Dorsolateral prefrontal cortex (tissue), 120 donors: ENCODE measurements at regions of chr11 and their contacts with region 1.

Region 1: DNA sequence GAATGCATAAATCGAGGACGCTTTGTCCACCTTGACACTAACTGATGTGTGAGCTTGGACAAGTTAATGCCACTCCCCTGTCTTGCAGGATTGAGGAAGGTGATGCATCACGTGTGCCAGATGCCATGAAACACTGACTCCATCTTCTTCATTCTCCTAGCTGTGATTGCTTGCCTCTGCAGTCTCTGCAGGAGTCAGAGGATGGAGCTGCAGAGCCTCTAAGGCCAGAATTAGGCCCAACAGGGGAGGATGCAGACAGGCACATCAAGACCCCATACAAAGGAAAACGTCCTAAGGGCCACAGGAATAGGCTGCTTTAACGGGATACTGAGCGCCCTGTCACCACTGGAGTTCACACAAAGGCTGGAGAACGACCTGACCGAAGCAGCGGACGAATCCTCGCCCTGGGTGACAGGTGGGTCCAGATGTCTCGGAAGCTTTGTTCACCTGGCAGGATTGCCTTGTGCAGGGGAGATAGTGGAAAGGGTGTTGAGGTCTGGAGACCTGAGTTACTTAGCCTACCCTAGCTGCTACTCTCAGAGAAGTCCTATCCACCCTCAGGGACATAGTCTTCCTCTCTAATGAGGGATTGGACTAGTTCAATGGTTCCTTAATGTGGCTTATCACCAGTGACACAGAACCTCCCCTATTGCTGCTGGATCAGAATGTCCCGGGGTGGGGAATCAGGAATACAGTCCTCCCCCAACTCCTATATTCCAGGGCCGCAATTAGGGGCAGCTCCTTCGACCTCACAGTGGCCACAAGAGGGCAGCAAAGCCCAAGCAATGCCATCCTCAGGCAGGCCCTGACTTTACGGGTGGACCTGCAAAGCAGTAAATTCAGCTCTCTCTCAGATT is 32.4 kb downstream of the DBX1 start:
- DNase-seq: peak; percentile 76 to 88 (median 85)
- H3K4me3 ChIP-seq: no peak overlapping the region
- H3K27ac ChIP-seq: peak overlapping the region in 1 of 59 donors; percentile 4
- H3K27me3 ChIP-seq: no peaks in the 10 kb centered on the region
- CTCF ChIP-seq: peak; percentile 78 to 95 (median 89)

Region 2: GRCh38 chr11:19071255-19071654 is 1056.6 kb before region 1 on chr11:
- intact Hi-C with region 1: loop called in 1 of 2 experiments (anchors 10 kb)
- DNase-seq: peak in 9 of 10 donors; percentile 25 to 75 (median 58)
- H3K4me3 ChIP-seq: peak overlapping the region in 14 of 59 donors; percentile 4 to 35 (median 20)
- H3K27ac ChIP-seq: no peak overlapping the region
- H3K27me3 ChIP-seq: peaks cover 0 to 31% (median 3%) of the 10 kb centered on the region in 45 donors
- CTCF ChIP-seq: peak; percentile 60 to 98 (median 90)

Region 3: DNA sequence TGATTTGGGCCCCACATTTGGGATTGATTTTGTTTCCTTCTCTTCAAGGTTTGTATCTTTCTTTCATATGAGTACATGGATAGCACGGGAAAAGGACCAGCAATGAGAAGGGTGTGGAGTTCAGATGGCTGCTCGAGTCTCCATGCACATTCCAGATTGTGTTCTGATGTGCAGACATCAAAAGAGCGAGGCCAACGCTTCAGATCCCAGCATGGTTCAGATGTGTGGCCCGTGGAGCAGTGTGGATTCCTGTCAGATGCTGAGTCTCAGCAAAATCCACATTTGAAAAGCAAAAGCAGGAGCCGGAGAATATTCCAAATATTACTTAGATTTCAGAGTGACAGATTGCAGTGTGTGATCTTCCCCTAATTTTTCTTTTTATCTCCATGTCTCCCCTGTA is 187.1 kb before region 1 on chr11:
- intact Hi-C with region 1: no loop called
- DNase-seq: no peak
- H3K4me3 ChIP-seq: no peak overlapping the region
- H3K27ac ChIP-seq: no peak overlapping the region
- H3K27me3 ChIP-seq: no peaks in the 10 kb centered on the region
- CTCF ChIP-seq: no peak

Region 4: DNA sequence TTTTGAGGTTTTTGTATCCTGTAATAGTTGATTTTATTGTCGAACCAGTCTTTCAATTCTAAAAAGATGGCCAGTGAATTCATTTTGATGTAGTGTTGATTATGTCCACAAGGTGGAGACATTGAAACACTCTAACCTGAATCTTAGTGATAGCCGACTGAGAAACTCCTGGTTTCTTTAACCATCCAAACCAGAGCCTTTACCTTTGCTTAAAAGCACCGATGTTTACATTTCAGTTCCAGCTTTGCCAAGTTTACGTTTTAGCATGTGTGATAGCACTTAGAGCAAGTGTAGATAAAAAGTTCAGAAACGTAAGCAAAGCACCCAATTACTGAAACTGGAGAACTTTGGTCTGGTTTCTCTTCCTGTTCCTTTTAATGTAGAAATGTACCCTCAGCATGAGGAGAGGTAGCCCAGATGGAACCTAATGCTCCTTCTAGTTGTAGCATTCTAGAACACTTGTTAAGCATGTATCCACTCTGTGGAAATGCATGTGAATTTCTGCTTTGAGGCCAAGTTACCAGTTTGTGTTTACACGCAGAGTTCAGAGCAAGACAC is 176.3 kb before region 1 on chr11:
- intact Hi-C with region 1: loop called in 1 of 2 experiments (anchors 5 kb)
- DNase-seq: no peak
- H3K4me3 ChIP-seq: peak overlapping the region in 32 of 59 donors; percentile 1 to 47 (median 26)
- H3K27ac ChIP-seq: peak overlapping the region in 39 of 59 donors; percentile 1 to 80 (median 41)
- H3K27me3 ChIP-seq: no peaks in the 10 kb centered on the region
- CTCF ChIP-seq: peak; percentile 56 to 86 (median 76)

Region 5: DNA sequence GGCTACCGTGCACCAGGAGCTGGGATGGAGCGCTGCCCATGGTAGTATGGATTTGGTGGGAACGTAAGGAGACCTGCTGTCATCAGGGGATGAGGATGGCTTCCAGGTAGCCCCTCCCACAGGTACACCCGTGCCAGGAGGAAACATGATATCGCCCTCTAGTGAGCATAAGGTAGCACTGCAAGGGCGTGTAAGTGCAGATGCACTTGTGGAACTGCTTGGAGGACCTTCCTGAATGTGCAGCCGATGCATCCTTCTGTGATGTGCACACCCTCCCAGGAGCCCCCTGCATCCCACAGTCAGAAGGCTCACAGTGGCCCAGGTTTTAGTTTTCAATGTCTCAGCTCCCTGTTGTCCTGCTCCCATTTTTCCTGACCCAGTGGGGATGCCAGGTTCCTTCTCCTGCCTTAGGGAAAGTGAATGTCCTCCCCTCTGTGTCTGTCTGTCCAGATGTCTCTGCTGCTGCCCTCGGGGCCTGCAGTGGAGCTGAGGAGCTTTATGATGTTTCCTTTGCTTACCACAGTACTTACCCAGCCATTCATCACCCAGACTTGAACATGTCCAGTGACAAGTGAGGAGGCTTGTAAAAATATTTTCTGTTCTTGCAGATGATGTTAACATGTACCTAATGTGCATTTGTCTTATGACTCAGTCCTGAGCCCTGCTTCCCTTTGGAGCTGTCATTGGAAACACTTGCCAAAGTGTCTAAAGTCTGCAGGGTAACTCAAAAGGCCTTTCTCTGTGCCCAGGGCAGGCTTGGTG is 16.8 kb before region 1 on chr11:
- intact Hi-C with region 1: no loop called
- DNase-seq: peak in 3 of 10 donors; percentile 35 to 47 (median 44)
- H3K4me3 ChIP-seq: no peak overlapping the region
- H3K27ac ChIP-seq: peak overlapping the region in 43 of 59 donors; percentile 1 to 87 (median 76)
- H3K27me3 ChIP-seq: no peaks in the 10 kb centered on the region
- CTCF ChIP-seq: peak; percentile 60 to 88 (median 82)

Region 6: GRCh38 chr11:20172721-20173447 is 45.0 kb after region 1 on chr11:
- intact Hi-C with region 1: no loop called
- DNase-seq: no peak
- H3K4me3 ChIP-seq: no peak overlapping the region
- H3K27ac ChIP-seq: no peak overlapping the region
- H3K27me3 ChIP-seq: peaks cover 0 to 65% (median 15%) of the 10 kb centered on the region in 45 donors
- CTCF ChIP-seq: no peak

Region 7: GRCh38 chr11:20355221-20356219 is 227.6 kb after region 1 on chr11:
- intact Hi-C with region 1: loop called (anchors 2 to 5 kb)
- DNase-seq: peak in 7 of 10 donors; percentile 32 to 59 (median 57)
- H3K4me3 ChIP-seq: no peak overlapping the region
- H3K27ac ChIP-seq: no peak overlapping the region
- H3K27me3 ChIP-seq: no peaks in the 10 kb centered on the region
- CTCF ChIP-seq: peak in 54 of 56 donors; percentile 33 to 80 (median 66)

Region 8: DNA sequence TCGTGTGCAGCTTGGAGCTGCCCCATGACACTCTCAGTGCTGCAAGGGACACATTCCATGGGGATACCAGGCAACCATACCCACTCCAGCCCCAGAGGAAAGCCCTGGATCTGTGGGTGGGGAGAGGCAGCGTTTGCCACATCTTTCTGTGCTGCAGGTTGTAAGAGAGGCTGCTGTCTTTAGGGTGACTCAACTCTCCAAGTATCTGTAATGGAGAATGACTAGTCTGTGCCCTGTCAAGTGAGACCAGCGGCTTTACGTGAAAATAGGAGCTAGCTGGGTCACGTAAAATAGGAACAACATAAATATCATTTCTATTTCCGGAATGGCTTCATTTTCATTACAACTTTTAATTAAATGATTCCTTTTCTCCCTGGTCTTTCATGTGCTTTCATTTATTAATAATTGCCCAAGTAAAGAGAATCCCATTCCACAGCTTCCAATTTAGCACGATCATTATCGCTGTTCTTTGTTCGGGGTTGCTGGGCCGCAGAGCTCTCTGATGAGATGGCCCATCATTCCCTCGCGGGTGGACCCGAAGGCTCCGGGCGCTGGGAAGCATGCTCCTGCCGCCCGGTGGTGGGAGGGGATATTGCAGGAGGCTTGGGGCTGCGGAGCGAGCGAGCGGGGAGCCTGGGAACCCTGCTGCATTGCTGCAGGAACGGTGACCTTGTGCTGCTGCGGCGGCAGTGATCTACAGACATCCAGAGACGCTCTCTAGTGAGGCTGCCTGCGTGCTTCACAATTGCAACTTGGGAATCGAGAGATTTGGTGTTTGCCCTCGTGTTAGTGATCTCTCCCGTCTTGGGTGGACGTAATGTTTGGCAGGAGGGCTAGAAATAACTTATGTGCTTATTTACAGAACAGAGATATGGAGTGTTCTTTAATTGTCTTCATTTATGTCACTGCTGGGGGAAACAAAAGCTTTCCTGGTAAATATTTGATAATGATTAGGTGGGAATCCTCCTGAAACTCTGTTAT is 482.1 kb after region 1 on chr11:
- intact Hi-C with region 1: loop called in 1 of 2 experiments (anchors 5 kb)
- DNase-seq: peak; percentile 63 to 88 (median 76)
- H3K4me3 ChIP-seq: peak overlapping the region in 44 of 59 donors; percentile 2 to 60 (median 31)
- H3K27ac ChIP-seq: no peak overlapping the region
- H3K27me3 ChIP-seq: peaks cover 6 to 71% (median 27%) of the 10 kb centered on the region in 45 donors
- CTCF ChIP-seq: peak; percentile 67 to 98 (median 92)